A673 (cell line): ENCODE measurements at regions of chr13 and their contacts with region 1.

Region 1: DNA sequence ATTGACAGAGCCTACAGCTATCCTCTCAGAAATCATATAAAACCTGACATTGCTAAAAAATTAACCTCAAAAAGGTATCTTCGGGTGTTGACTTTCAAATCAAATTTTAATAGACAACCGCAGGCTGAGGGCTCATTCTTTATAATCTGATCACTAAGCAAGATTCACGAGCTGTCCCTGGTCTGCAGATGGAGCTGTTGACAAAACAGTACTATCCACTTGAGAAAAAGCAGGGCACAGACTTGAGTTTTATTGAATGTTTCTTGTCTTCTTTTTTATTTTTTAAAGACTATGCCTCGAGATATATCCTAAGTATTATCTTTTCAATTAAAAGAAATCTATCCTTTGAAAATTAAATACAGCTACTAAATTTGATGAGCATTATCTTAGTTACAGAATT is 540.5 kb downstream of the PCDH9 start:
- DNase-seq: peak; percentile 7
- H3K4me3 ChIP-seq: no peak overlapping the region
- H3K27ac ChIP-seq: no peak overlapping the region
- H3K4me1 ChIP-seq: no peaks in the 10 kb centered on the region
- H3K27me3 ChIP-seq: no peaks in the 10 kb centered on the region
- CTCF ChIP-seq: peak; percentile 34; the same call in 1 of the 2 replicates

Region 2: DNA sequence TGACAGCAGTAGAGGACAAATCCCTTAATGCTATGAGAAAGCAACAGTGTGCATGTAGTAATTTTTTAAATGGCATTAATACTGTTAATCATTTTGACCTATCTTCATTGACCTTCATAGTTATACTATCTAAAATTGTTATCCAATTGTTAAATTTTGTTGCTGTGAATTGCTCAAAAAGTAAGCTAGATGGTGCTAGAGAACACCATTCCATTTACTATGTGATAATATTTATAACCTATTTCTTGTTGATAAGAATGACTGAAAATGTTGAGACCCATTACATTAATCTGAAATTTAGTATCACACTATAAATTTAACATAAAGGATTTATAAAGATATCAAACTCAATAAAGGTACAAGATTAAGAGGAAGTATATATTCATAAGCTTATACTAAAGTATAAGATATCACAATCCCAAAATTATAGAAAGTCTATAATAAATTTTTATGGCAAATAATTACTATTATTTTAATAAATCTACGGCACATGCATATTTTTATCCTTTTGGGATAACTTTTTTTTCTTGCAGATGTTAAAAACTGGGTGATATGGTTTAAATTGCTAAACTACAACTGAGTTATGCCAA is 1032.8 kb before region 1 on chr13:
- CTCF ChIA-PET with region 1: no interaction called
- POLR2A ChIA-PET with region 1: no interaction called
- intact Hi-C with region 1: loop called (anchors 10 kb)
- DNase-seq: peak; percentile 13
- H3K4me3 ChIP-seq: no peak overlapping the region
- H3K27ac ChIP-seq: no peak overlapping the region
- H3K4me1 ChIP-seq: no peaks in the 10 kb centered on the region
- H3K27me3 ChIP-seq: no peaks in the 10 kb centered on the region
- CTCF ChIP-seq: peak; percentile 65

Region 3: GRCh38 chr13:66624302-66624701 is 65.3 kb before region 1 on chr13:
- CTCF ChIA-PET with region 1: no interaction called
- POLR2A ChIA-PET with region 1: no interaction called
- intact Hi-C with region 1: loop called (anchors 5 kb)
- DNase-seq: no peak
- H3K4me3 ChIP-seq: no peak overlapping the region
- H3K27ac ChIP-seq: no peak overlapping the region
- H3K4me1 ChIP-seq: no peaks in the 10 kb centered on the region
- H3K27me3 ChIP-seq: no peaks in the 10 kb centered on the region
- CTCF ChIP-seq: no peak

Region 4: GRCh38 chr13:66635526-66635925 is 54.1 kb before region 1 on chr13:
- CTCF ChIA-PET with region 1: no interaction called
- POLR2A ChIA-PET with region 1: no interaction called
- intact Hi-C with region 1: no loop called
- DNase-seq: no peak
- H3K4me3 ChIP-seq: no peak overlapping the region
- H3K27ac ChIP-seq: no peak overlapping the region
- H3K4me1 ChIP-seq: no peaks in the 10 kb centered on the region
- H3K27me3 ChIP-seq: no peaks in the 10 kb centered on the region
- CTCF ChIP-seq: no peak

Region 5: GRCh38 chr13:67224148-67224846 is 534.7 kb after region 1 on chr13:
- CTCF ChIA-PET with region 1: no interaction called
- POLR2A ChIA-PET with region 1: no interaction called
- intact Hi-C with region 1: loop called (anchors 5 kb)
- DNase-seq: peak; percentile 81
- H3K4me3 ChIP-seq: peak overlapping the region; percentile 27
- H3K27ac ChIP-seq: no peak overlapping the region
- H3K4me1 ChIP-seq: peaks cover 6% of the 10 kb centered on the region
- H3K27me3 ChIP-seq: no peaks in the 10 kb centered on the region
- CTCF ChIP-seq: peak; percentile 69